ENCODE measurements at regions of chr7 and their contacts with region 1.

Region 1: DNA sequence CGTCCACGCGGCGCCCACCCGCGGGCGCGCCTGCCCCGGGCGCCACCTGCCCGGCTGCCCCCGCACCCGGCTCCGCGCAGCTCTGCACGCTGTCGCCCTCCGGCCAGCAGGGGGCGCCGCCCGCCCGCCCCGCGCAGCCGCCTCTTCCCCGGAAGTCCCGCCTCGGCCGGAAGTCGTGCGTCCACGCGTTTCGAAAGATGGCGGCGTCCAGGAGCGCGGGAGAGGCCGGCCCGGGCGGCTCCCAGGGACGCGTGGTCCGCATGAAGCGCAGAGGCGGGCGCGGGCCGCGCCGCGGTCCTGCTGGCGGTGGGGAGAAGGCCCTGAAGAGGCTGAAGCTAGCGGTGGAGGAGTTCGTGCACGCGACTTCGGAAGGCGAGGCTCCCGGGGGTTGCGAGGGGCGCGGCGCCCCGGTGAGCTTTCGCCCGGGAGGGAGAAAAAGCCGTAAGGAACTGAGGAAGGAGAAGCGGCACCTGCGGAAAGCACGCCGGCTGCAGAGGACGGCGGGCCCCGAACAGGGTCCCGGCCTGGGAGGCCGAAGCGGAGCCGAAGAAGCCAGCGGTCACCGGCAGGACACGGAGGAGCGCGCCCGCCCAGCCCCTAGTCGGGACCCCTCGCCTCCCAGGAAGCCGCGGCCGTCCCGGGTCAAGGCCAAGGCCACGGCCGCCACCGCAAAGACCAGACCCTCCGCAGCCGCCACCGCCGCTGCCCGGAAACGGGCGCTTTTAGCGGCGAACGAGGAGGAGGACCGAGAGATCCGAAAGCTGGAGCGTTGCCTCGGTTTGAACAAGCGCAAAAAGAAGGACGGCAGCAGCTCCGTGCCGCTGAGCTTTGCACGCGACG is at the start of gene NOM1:
- DNase-seq: peak; percentile 84 to 97
- H3K4me3 ChIP-seq: peak within 1 kb of the TSS; percentile 80
- CTCF ChIP-seq: peak in 1 of 3 donors; percentile 2
- POLR2A ChIP-seq: no peak
- total RNA-seq, gene NOM1: 9.0 to 26.4 (median 17.4) TPM

Region 2: GRCh38 chr7:157193274-157193673 is 243.5 kb after region 1 on chr7:
- intact Hi-C with region 1: no loop called
- DNase-seq: no peak
- H3K4me3 ChIP-seq: no peak overlapping the region
- CTCF ChIP-seq: no peak
- POLR2A ChIP-seq: no peak

Region 3: DNA sequence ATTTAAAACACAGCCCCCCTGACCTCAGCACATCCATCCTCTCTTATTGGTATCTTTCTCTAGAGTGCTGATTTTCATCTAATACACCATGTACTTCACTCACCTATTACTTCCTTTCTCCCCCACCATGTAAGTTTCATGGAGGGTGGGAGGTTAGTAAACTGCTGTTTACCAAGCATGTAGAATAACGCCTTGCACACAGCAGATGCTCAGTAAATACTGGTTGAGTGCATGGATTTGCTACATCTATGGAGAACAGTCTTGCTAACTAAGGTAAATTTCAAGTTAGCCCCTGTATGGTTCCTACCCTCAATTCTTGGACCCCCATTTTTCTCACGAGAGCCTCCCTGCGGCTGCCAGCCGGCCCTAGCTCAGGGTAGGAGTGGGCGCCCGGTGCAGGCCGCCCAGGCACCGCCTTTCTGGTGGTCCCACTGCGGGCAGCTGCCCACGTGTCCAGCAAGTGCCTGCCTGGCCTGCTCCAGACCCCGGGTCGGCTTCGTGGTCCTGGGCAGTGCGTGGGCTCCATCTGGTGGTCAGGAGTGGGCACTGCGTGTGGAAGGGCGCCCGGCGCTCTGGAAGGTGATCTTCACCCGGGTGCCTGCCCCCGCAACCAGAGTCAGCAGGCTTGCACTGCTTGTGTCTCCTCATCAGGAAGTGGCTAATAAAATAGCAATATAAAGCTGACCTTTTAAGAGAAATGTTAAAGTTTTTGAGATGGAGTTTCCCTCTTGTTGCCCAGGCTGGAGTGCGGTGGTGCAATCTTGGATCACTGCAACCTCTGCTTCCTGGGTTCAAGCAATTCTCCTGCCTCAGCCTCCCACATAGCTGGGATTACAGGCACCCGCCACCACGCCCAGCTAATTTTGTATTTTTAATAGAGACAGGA is 323.7 kb after region 1 on chr7:
- intact Hi-C with region 1: loop called (anchors 10 kb)
- DNase-seq: peak in 1 of 2 donors; percentile 90
- H3K4me3 ChIP-seq: no peak overlapping the region
- CTCF ChIP-seq: peak in 1 of 3 donors; percentile 91
- POLR2A ChIP-seq: no peak

Measured in lower leg skin (tissue), 4 donors.